ENCODE measurements at regions of chr11 and their contacts with region 1.

Region 1: GRCh38 chr11:88535916-88536547 is 198.5 kb upstream of the CTSC start:
- DNase-seq: no peak
- H3K4me3 Mint-ChIP-seq: no peak overlapping the region
- H3K27ac Mint-ChIP-seq: peak overlapping the region; percentile 97
- H3K4me1 Mint-ChIP-seq: peaks cover 74% of the 10 kb centered on the region
- H3K27me3 Mint-ChIP-seq: no peaks in the 10 kb centered on the region
- CTCF ChIP-seq: no peak

Region 2: GRCh38 chr11:88103337-88104206 is 432.5 kb before region 1 on chr11:
- CTCF ChIA-PET with region 1: interaction called, 15 read pairs
- intact Hi-C with region 1: loop called (anchors 2 kb)
- DNase-seq: peak; percentile 70
- H3K4me3 Mint-ChIP-seq: peak overlapping the region; percentile 51
- H3K27ac Mint-ChIP-seq: peak overlapping the region; percentile 89
- H3K4me1 Mint-ChIP-seq: peaks cover 41% of the 10 kb centered on the region
- H3K27me3 Mint-ChIP-seq: no peaks in the 10 kb centered on the region
- CTCF ChIP-seq: peak; percentile 70

Region 3: GRCh38 chr11:88315981-88316441 is 220.0 kb before region 1 on chr11:
- CTCF ChIA-PET with region 1: no interaction called
- intact Hi-C with region 1: loop called (anchors 5 kb)
- DNase-seq: no peak
- H3K4me3 Mint-ChIP-seq: peak overlapping the region; percentile 46
- H3K27ac Mint-ChIP-seq: peak overlapping the region; percentile 68
- H3K4me1 Mint-ChIP-seq: peaks cover 33% of the 10 kb centered on the region
- H3K27me3 Mint-ChIP-seq: no peaks in the 10 kb centered on the region
- CTCF ChIP-seq: no peak

Region 4: DNA sequence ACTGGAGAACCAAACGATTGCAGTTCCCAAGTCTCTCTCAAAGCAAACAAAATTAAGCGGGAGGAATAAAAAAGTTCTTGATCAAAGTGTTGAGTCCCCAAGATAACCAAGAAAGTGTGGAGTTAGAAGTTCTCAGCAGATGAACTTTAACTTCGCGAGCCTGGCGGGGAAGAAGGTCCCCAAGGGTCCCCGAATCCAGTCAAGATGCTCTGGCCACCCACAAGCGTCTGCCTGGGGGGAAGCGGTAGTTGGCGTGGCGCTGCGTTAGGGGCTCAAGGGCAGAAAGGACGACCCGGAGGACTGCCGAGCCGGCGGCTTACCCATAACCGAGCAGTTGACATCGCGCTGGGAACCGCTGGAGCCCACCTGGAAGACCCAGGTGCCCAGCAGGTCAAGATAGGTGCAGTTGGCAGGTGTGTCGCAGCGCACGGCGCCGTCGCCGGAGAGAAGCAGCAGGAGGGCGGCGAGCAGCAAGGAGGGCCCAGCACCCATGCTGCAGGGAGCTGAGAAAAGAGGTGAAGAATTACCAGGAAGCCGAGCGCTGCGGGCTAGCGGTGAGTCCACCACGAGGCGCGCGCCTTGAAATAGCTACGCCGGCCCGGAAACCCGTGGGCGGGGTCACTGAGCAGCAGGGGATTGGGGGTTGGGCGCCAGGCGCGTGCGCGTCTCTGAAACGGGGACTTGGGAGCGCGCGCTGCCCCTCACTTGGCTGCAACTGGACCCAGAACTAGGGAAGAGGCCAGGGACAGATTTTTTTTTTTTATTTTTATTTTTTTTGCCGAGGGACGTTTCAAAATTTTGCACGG is 198.6 kb before region 1 on chr11 and contains the start of gene CTSC:
- CTCF ChIA-PET with region 1: interaction called, 5 read pairs
- intact Hi-C with region 1: loop called (anchors 5 kb)
- DNase-seq: peak; percentile 94
- H3K4me3 Mint-ChIP-seq: peak within 1 kb of the TSS; percentile 97
- H3K27ac Mint-ChIP-seq: peak within 1 kb of the TSS; percentile 74
- H3K4me1 Mint-ChIP-seq: peaks cover 16% of the 10 kb centered on the region
- H3K27me3 Mint-ChIP-seq: no peaks in the 10 kb centered on the region
- CTCF ChIP-seq: no peak
- total RNA-seq, gene CTSC: 413 and 478 TPM in 2 replicates

Region 5: DNA sequence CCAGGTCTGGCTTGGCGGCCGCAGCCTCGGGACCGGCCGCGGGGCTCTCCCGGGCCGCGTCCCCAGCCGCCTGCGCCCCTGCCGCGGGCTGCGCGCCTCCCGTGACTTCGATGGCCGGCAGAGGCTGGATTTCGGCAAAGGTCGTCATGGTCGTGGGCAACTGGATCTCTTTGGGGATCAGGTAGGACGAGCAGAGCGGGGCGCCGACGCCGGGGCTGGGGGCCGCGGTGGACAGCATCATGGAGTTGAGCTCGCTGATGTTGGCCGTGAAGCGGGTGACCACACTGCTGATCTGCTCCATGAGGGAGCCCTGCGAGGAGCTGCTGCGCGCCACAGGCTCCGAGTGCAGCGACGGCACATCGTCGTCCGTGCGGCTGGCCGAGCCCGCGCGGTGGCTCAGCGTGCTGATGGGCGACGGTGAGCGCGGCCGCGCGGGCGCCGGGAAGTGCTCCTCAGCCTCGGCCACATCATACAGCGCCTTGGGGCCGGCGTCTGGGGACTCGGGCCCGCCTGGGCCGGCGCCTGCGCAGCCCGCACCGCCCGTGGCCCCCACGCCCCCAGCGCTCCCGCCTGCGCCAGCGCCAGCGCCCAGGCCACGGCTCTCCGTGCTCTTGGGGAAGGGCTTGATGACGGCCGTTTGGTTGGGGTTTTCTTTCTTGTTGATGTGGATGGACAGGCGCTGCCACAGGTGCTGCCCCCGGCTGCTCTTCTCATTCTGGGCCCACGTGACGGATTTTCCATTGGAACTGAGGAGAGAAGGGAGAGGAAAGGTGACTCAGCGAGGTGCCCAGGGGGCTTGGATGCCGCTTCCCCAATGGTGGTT is 27.1 kb before region 1 on chr11:
- CTCF ChIA-PET with region 1: no interaction called
- intact Hi-C with region 1: loop called (anchors 1 kb)
- DNase-seq: peak; percentile 56
- H3K4me3 Mint-ChIP-seq: peak overlapping the region; percentile 83
- H3K27ac Mint-ChIP-seq: peak overlapping the region; percentile 98
- H3K4me1 Mint-ChIP-seq: peaks cover 19% of the 10 kb centered on the region
- H3K27me3 Mint-ChIP-seq: no peaks in the 10 kb centered on the region
- CTCF ChIP-seq: no peak

Region 6: DNA sequence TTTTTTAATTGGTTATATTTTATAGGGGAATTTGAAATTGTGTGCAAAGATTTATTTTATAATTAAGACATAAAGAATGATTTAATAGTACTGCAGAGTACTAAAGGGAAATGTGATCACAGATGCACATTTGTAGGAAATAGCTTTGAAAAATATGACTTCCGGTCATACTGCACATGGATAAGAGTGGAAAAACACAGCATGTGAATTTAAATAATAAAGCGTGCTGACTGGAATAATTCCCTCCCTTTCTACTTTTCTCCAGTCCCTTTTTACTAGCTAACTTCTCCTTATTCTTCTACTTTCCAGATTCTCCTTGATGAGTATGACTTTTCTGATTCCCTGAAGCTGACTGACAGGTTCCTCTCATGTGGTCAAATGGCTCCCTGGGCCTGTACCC is 39.9 kb after region 1 on chr11:
- CTCF ChIA-PET with region 1: no interaction called
- intact Hi-C with region 1: no loop called
- DNase-seq: no peak
- H3K4me3 Mint-ChIP-seq: no peak overlapping the region
- H3K27ac Mint-ChIP-seq: no peak overlapping the region
- H3K4me1 Mint-ChIP-seq: peaks cover 7% of the 10 kb centered on the region
- H3K27me3 Mint-ChIP-seq: no peaks in the 10 kb centered on the region
- CTCF ChIP-seq: no peak